ENCODE measurements at regions of chr15 and their contacts with region 1.

Region 1: DNA sequence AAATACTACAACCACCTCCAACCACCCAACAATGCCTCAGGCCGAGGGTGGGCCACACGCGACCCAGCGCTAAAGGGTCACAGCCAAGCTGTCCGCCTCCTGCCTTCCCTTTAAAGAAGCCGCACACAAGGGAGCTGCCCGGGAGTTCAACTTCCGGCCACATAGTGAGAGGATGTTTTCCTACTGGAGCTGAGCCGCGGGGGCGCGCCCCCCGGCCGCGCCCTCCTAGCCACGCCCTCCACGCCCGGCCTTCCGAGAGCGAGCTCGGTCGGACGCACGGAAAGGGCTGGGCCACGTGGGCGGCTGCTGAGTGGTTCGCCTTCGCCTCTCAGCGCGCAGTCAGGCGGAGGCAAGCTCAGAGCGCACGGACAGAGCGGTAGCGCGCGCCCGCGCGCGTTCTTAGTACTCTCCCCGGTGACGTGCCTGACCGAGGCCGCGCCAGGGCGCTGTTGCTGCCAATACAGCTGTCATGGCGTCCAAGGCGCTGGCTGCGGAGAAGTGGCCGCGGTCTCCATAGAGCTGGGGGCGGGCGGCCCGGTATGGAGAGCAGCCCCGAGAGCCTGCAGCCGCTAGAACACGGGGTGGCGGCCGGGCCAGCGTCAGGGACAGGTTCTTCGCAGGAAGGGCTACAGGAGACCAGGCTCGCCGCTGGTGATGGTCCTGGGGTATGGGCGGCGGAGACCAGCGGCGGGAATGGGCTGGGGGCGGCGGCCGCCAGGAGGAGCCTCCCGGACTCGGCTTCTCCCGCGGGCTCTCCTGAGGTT is at the start of gene MINDY2:
- DNase-seq: peak; percentile 97 to 99 (median 98)
- H3K4me3 ChIP-seq: peak within 1 kb of the TSS; percentile 37 to 91 (median 84)
- H3K27ac ChIP-seq: peak within 1 kb of the TSS; percentile 75 to 98 (median 98)
- H3K4me1 ChIP-seq: peaks cover 24 to 38% of the 10 kb centered on the region in 2 donors
- H3K27me3 ChIP-seq: no peaks in the 10 kb centered on the region
- CTCF ChIP-seq: peak in 4 of 6 experiments; percentile 20 to 36 (median 28)
- POLR2A ChIP-seq: peak; percentile 86 to 99
- total RNA-seq, gene MINDY2: 7.7 to 25.1 (median 13.7) TPM

Region 2: DNA sequence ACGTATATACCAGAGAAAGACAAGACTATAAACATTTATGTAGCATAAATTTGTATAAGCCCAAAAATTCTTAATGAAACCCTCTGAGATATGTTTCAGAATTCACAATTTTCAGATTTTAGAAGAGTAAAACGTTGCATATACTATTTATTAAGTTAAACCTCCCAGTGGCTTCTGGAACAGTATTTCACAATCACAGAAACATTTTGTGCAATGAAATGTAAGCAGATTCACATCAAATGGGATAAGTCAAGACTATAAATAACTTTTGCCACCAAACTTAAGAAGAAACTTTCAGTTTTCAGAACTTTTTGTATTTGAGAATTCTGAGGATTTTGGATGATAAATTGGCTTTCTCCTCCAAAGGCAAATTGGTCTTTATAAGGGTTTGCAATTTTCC is 153.3 kb after region 1 on chr15:
- intact Hi-C with region 1: loop called in 1 of 2 experiments (anchors 10 kb)
- DNase-seq: no peak
- H3K4me3 ChIP-seq: no peak overlapping the region
- H3K27ac ChIP-seq: peak overlapping the region in 3 of 5 donors; percentile 21 to 61 (median 29)
- H3K4me1 ChIP-seq: peaks cover 13 to 26% of the 10 kb centered on the region in 2 donors
- H3K27me3 ChIP-seq: no peaks in the 10 kb centered on the region
- CTCF ChIP-seq: no peak
- POLR2A ChIP-seq: no peak

Measured in adrenal gland (tissue), 19 donors.